Body of pancreas (tissue), 4 donors: ENCODE measurements at regions of chr1 and their contacts with region 1.

Region 1: DNA sequence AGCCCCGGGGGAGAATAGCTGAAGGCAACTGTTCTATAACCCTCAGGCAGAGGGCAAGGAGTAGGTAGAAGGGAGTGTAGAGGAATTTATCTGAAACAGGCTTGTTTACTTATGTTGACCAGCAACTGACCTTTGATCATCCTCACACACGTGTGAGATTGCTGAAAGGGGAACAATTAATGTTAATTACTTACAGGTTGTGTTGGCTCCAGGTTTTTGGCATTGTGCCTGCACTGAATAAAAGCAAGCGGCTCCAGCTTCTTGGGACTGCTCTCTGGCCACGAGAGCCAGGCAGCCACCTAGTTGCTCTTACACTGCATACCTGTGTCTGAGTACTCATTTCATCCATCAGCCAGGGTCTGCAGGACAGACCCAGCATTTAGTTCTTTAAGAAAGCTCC is 41.3 kb upstream of the ARHGEF10L start:
- DNase-seq: peak in 1 of 4 donors; percentile 13
- ATAC-seq: no peak
- H3K4me3 ChIP-seq: no peak overlapping the region
- H3K27ac ChIP-seq: no peak overlapping the region
- H3K4me1 ChIP-seq: peaks cover 6% of the 10 kb centered on the region
- H3K27me3 ChIP-seq: no peaks in the 10 kb centered on the region
- CTCF ChIP-seq: no peak
- POLR2A ChIP-seq: no peak

Region 2: DNA sequence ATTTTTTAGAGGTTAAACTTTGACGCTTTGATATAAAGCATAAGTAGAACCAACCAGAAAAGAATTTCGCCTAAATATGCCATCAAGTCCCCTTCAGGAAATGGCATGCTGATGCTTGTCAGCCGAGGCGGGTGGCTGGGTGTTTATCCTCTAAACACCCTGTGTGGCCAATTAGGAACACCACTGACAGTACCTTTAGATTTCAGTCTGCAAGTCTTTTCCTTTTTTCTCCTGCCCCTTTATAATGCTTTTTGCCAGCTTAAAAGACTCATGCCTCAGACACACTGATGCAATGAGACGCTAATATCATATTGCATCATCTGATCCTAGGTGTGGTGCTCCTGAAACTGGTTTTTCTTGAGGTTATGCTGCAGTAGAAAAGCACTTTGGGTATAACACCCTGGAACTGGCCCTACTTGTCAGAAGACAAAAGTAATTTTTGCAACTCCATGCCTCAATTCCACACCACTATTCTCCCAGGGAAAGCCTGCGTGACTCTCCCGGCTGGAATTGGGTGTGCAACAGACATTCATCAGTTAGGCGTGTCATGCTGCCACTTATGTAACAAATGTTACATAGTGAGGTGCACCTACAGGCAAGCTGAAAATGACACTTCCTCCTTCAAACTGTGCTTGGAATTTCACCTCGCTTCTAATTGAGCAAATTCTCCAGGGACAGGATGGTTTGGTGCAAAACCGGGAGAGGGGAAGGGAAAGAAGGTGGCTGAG is 56.8 kb before region 1 on chr1:
- intact Hi-C with region 1: no loop called
- DNase-seq: no peak
- ATAC-seq: no peak
- H3K4me3 ChIP-seq: no peak overlapping the region
- H3K27ac ChIP-seq: no peak overlapping the region
- H3K4me1 ChIP-seq: peaks cover 17% of the 10 kb centered on the region
- H3K27me3 ChIP-seq: no peaks in the 10 kb centered on the region
- CTCF ChIP-seq: no peak
- POLR2A ChIP-seq: no peak

Region 3: GRCh38 chr1:17606826-17607440 is 108.7 kb after region 1 on chr1:
- intact Hi-C with region 1: loop called (anchors 5 kb)
- DNase-seq: peak; percentile 74 to 82 (median 78)
- ATAC-seq: peak; percentile 69
- H3K4me3 ChIP-seq: no peak overlapping the region
- H3K27ac ChIP-seq: peak overlapping the region in 1 of 4 donors; percentile 56
- H3K4me1 ChIP-seq: peaks cover 18% of the 10 kb centered on the region
- H3K27me3 ChIP-seq: no peaks in the 10 kb centered on the region
- CTCF ChIP-seq: peak; percentile 82 to 94 (median 88)
- POLR2A ChIP-seq: no peak